Thyroid gland (tissue), 4 donors: ENCODE measurements at regions of chr12 and their contacts with region 1.

Region 1: GRCh38 chr12:80186727-80187217 is 87.4 kb downstream of the OTOGL start:
- DNase-seq: peak; percentile 44 to 52
- H3K4me3 ChIP-seq: no peak overlapping the region
- H3K27ac ChIP-seq: peak overlapping the region; percentile 59 to 81 (median 69)
- H3K4me1 ChIP-seq: peaks cover 0 to 4% of the 10 kb centered on the region in 2 donors
- H3K27me3 ChIP-seq: no peaks in the 10 kb centered on the region
- CTCF ChIP-seq: peak in 5 of 6 experiments; percentile 21 to 78 (median 76)
- POLR2A ChIP-seq: no peak

Region 2: DNA sequence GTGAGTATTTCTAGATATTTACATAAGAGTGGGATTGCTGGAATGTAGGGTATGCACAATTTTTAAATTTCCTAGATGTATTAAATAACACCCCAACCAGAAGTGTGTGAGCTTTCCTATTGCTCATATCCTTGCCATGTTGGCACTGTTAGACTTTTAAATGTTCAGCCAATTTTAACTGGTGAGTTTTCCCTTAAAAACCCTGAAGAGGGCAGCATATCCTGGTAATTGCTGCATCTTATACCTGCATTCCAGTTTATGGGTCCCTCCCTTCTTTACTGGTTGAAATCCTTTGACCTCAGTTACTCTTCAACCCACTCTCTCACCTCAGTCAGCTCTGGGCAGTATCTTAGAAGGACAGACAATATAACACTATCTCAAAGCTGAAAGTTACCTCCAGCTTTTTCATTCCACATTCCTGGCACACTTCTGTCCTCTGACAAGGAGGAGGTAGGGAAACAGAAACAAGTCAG is 766.6 kb before region 1 on chr12:
- intact Hi-C with region 1: loop called (anchors 10 kb)
- DNase-seq: peak in 1 of 2 donors; percentile 4
- H3K4me3 ChIP-seq: no peak overlapping the region
- H3K27ac ChIP-seq: peak overlapping the region; percentile 38 to 56 (median 44)
- H3K4me1 ChIP-seq: peaks cover 32 to 48% of the 10 kb centered on the region in 2 donors
- H3K27me3 ChIP-seq: no peaks in the 10 kb centered on the region
- CTCF ChIP-seq: peak in 4 of 6 experiments; percentile 46 to 85 (median 66)
- POLR2A ChIP-seq: no peak

Region 3: DNA sequence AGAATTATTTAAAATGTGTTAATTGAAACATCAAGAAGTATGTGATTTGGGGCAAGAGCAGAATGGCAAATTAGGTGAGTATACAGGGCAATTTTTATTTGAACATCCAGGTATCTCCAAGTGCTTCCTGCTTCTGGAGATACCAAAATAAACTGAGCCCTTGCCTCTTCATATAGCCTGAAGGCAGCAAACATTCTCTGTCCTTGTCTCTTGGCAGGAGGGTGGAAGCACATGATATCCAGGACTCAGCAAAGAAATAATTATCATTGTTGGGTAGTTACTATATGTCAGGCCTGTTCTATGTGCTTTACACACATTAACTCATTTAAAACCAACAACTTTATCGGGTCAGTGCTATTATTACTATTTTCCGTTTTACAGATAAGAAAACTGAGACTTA is 738.5 kb after region 1 on chr12:
- intact Hi-C with region 1: no loop called
- DNase-seq: no peak
- H3K4me3 ChIP-seq: no peak overlapping the region
- H3K27ac ChIP-seq: no peak overlapping the region
- H3K4me1 ChIP-seq: no peaks in the 10 kb centered on the region
- H3K27me3 ChIP-seq: no peaks in the 10 kb centered on the region
- CTCF ChIP-seq: no peak
- POLR2A ChIP-seq: no peak